ENCODE measurements at regions of chr16 and their contacts with region 1.

Region 1: DNA sequence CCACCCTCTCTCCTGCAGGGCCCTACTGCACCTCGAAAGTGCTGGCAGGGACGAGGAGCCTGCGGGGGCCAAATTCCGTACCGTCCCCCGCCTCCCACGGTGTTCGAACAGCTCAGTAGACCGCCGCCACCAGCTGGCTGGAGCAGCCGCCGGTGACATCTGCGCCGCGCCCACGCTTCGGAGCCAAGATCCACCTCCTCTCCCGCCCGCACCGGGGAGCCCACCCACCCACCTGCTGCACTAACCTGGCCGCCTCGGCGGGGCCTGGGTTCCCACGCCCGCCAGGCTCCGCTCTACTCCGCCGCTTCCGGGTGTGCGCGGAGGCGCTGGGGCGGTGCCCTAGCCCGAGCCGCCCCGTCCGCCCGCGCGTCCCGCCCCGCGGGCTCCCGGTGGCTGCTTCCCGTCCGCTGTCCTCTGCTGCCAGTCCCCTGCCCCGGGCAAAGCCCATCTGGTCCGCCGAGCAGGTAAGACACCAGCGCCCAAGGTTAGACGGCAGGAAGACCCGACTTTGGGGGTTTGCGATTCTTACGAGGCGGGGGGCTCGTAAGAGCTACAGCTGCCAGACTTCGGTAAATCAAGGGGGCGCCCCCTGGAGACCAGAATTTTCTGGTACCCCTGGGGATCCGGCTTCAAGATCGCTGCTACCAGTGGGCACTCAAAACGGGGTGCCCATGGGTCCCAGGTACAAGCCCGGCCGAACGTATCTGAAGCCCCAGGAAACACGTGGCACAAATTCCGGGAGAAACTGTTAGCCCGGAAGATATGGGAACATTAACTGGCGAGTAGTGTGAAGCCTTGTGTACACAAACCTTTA is at the starts of genes FBXL8 and TRADD:
- H3K4me3 ChIP-seq: peak within 1 kb of the TSS; percentile 75
- H3K27ac ChIP-seq: no peak within 1 kb of the TSS; the same call in 1 of the 2 replicates
- H3K4me1 ChIP-seq: no peaks in the 10 kb centered on the region
- CTCF ChIP-seq: peak; percentile 75

Region 2: DNA sequence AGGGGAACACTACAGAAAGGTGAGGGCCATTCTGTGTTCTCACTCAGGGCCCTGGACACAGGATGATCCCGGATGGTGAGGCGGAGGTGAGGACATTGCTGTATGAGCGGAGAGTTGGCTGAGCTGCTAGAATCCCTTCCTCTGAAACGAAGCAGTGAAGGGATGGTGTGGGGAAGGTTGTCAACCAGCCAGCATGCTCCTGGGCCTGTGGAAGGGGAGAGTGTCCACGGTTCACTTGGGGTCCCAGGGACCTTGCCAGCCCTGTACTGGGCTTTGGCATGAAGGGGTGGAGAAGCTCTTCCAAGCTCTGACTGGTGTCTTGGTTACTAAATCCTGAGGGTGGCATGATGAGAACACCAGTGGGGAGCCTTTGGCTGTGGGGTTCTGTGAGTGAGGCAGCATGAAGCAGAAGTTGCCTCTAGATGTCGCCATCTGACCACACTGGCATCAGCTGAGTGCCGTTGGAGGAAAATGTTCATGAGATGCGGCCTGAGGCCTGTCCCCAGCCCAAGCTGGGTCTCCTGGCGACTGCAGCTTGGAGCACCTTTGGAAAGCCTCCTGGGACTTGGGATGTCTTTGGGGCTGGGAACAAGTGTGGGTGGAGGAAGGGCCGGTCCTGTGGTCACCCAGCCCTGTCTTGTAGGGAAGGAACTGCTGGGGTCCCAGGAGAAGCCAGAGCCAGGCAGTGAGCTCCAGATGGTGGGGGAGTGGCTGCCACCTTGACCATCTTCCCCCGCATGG is 264.7 kb before region 1 on chr16:
- CTCF ChIA-PET with region 1: interaction called, 14 read pairs
- POLR2A ChIA-PET with region 1: no interaction called
- H3K4me3 ChIP-seq: no peak overlapping the region
- H3K27ac ChIP-seq: no peak overlapping the region
- H3K4me1 ChIP-seq: peaks cover 6% of the 10 kb centered on the region; the same call in 1 of the 2 replicates
- CTCF ChIP-seq: peak; percentile 97

Region 3: DNA sequence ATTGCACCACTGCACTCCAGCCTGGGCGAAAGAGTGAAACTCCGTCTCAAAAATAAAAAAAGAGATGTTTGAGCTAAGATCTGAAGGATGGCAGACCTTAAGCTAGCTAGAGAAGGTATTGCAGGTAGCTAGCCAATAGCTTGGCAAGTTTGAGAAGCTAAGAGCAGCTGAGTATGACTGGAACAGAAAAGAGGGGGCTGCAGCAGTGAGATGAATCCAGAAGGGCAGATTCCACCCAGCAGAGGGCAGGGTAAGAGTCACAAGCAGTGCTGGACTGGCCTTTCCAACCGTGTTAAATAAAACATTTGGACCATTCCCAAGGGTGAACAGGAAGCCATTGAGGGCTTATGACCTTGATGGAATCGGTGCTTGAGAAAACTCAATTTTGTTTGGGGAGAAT is 55.7 kb before region 1 on chr16:
- CTCF ChIA-PET with region 1: interaction called, 17 read pairs
- POLR2A ChIA-PET with region 1: interaction called, 4 read pairs
- H3K4me3 ChIP-seq: no peak overlapping the region
- H3K27ac ChIP-seq: no peak overlapping the region
- H3K4me1 ChIP-seq: peaks cover 5% of the 10 kb centered on the region; the same call in 1 of the 2 replicates
- CTCF ChIP-seq: no peak

Region 4: DNA sequence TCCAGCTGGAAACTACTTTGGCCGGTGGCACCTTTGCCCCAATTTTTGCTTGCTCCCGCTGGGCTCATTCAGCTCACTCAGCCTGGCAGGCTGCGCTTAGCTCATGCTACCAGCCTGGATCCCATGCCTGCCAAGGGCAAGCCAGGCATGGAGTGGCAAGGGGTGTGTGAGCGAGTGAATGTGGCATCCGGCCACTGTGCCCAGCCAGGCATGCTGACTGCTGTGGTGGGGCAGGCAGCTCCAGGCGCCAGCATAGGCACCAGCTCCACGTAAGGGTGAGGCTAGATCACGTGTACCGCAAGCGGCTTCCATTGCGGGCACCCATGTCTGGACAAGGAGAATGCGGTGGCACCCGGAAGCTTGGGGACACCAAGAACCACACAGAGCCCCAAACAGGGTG is 18.4 kb before region 1 on chr16:
- CTCF ChIA-PET with region 1: interaction called, 20 read pairs
- POLR2A ChIA-PET with region 1: no interaction called
- H3K4me3 ChIP-seq: no peak overlapping the region
- H3K27ac ChIP-seq: no peak overlapping the region
- H3K4me1 ChIP-seq: no peaks in the 10 kb centered on the region; the same call in 1 of the 2 replicates
- CTCF ChIP-seq: no peak

Region 5: GRCh38 chr16:67170168-67170947 is 10.6 kb after region 1 on chr16 and contains the start of gene NOL3:
- CTCF ChIA-PET with region 1: interaction called, 11 read pairs
- POLR2A ChIA-PET with region 1: interaction called, 5 read pairs
- H3K4me3 ChIP-seq: peak within 1 kb of the TSS; percentile 36
- H3K27ac ChIP-seq: peak within 1 kb of the TSS; percentile 59; the same call in 1 of the 2 replicates
- H3K4me1 ChIP-seq: peaks cover 9% of the 10 kb centered on the region
- CTCF ChIP-seq: peak; percentile 43; the same call in 1 of the 2 replicates

Region 6: DNA sequence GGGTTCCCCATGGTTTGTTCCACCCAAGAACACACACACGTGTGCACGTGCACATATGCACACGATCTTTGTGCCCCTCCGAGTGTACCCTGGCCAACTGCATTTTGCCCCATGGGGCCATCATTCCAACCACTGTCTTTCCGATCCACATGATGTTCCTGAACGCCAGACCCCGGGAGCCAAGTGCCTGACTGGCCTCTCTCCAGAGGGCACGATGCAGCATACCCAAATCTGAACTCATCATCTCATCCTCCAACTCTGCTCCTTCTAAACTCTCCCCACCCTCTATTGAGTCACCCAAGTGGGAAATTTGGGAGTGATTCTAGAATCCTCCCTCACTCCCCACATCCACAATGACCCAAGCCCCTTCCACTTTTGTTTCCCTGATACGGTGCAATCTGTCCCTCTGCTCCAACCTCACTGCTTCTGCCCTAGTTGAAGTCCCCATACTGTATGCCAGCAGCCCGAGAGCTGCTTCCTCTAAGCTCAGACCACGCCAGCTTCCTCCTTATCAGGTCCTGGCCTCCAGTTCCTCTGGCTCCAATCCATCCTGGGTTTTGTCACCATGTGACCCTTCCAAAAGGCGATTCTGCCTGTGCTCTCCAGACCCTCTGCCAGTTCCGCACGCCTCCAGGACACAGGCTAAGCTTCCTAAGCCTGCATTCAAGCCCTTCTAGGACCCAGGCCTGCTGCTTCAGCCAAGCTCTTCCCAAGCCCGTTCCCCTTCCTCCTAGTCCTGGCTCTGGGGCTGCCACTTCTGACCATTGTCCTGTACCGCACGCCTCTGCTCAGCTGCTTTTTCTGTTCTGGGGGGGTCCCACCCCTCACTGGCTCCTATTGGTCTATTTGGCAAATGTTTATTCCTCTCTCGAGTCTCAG is 57.1 kb after region 1 on chr16:
- CTCF ChIA-PET with region 1: no interaction called
- POLR2A ChIA-PET with region 1: no interaction called
- H3K4me3 ChIP-seq: no peak overlapping the region
- H3K27ac ChIP-seq: no peak overlapping the region
- H3K4me1 ChIP-seq: no peaks in the 10 kb centered on the region
- CTCF ChIP-seq: no peak

Region 7: GRCh38 chr16:67246934-67247697 is 87.3 kb after region 1 on chr16 and contains the start of gene FHOD1:
- CTCF ChIA-PET with region 1: no interaction called
- POLR2A ChIA-PET with region 1: no interaction called
- H3K4me3 ChIP-seq: peak within 1 kb of the TSS; percentile 69
- H3K27ac ChIP-seq: peak within 1 kb of the TSS; percentile 75
- H3K4me1 ChIP-seq: peaks cover 9% of the 10 kb centered on the region
- CTCF ChIP-seq: no peak; the same call in 1 of the 2 replicates

Region 8: GRCh38 chr16:67372664-67373063 is 212.9 kb after region 1 on chr16:
- CTCF ChIA-PET with region 1: no interaction called
- POLR2A ChIA-PET with region 1: no interaction called
- H3K4me3 ChIP-seq: no peak overlapping the region
- H3K27ac ChIP-seq: no peak overlapping the region
- H3K4me1 ChIP-seq: no peaks in the 10 kb centered on the region
- CTCF ChIP-seq: peak; percentile 41; the same call in 1 of the 2 replicates

Measured in HEK293 (cell line).